A673 (cell line): ENCODE measurements at regions of chr6 and their contacts with region 1.

Region 1: DNA sequence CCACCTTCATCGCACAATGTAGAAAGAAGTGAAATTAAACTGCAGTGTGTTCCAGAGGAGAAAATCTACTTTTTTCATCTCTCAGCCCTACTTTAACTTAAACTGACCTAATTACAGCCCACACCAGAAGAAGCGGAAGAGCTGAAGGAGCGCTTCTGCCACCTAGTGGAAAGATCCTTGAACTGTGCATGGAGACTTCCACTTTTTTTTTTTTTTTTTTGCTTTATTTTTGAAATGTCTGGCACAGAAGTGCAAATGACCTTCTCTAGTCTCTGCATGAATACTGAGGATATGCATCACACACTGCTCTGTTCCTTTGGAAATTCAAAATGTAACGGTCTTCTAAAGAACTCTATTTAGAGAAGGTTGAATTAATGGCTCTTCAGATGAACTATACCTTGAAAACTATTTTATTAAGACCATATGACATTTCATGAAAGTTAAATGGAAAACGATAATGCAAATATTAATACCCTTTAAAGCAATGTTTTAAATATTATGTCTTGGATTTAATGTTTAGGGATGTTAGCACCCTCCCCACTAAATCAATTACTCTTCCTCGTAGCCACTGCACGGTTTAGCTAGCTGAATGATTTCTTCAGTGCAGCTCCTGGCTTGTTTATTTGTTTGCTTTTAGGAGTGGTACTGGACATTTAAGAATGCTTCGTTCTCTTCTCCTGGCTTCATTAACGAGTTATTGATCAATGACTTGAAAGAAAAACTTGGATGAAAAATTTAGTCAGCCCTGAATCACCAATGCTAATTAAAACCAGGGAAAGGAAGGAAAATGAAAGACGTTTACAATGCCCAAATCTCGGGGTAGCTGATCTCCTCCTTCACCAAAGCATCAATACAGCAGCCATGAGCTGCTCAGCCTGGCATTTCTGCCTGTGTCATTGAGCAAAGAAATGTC is 569.6 kb upstream of the GJE1 start:
- DNase-seq: peak; percentile 93
- H3K4me3 ChIP-seq: peak overlapping the region; percentile 6
- H3K27ac ChIP-seq: peak overlapping the region; percentile 87
- H3K4me1 ChIP-seq: peaks cover 36% of the 10 kb centered on the region
- H3K27me3 ChIP-seq: no peaks in the 10 kb centered on the region
- CTCF ChIP-seq: peak; percentile 92

Region 2: GRCh38 chr6:139872665-139873064 is 1690.4 kb before region 1 on chr6:
- CTCF ChIA-PET with region 1: no interaction called
- POLR2A ChIA-PET with region 1: interaction called, 8 read pairs
- intact Hi-C with region 1: loop called (anchors 2 kb)
- DNase-seq: peak; percentile 58
- H3K4me3 ChIP-seq: no peak overlapping the region
- H3K27ac ChIP-seq: peak overlapping the region; percentile 98
- H3K4me1 ChIP-seq: peaks cover 48% of the 10 kb centered on the region
- H3K27me3 ChIP-seq: no peaks in the 10 kb centered on the region
- CTCF ChIP-seq: no peak

Region 3: GRCh38 chr6:140285471-140285870 is 1277.6 kb before region 1 on chr6:
- CTCF ChIA-PET with region 1: no interaction called
- POLR2A ChIA-PET with region 1: no interaction called
- intact Hi-C with region 1: loop called (anchors 1 kb)
- DNase-seq: peak; percentile 63
- H3K4me3 ChIP-seq: no peak overlapping the region
- H3K27ac ChIP-seq: peak overlapping the region; percentile 91
- H3K4me1 ChIP-seq: peaks cover 36% of the 10 kb centered on the region
- H3K27me3 ChIP-seq: no peaks in the 10 kb centered on the region
- CTCF ChIP-seq: no peak

Region 4: DNA sequence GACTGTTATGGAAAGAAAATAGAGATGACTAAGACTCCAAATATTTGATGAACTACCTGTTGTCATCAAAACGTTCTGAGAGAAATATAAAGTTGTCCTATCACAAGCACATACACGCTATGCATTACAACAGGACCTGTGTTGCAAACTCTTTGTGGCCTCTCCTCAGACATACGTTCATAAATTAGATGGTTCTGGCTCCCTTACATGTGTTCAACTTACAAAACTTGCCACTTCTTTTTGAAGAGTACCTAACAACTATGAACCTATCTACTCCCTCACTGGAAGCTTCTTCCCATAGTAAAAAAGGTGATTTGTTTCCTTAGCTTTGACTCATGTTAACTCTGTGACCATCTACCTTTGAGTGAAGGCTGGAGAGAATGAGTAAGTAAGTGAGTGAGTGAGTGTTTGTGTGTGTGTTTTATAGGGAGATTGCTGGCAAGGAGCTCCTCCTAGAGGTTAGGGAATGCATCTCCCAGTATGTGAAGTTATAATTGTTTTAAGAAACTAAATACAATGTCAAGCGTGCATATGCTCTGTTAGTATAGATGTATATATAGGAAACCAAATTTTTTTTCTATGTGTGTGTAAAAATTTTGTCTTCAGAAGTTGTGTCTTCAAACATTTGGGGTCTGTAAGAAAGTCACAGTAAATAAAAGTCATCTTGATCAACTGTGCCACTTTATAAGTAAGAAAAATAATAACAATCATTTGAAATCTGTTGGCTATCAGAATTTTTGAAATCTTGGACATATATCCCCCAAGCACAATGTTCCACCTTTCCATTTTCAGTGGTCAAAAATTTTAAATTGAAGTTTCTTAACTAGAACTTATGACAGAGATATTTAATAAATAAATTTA is 641.5 kb before region 1 on chr6:
- CTCF ChIA-PET with region 1: no interaction called
- POLR2A ChIA-PET with region 1: no interaction called
- intact Hi-C with region 1: loop called (anchors 5 kb)
- DNase-seq: peak; percentile 84
- H3K4me3 ChIP-seq: no peak overlapping the region
- H3K27ac ChIP-seq: peak overlapping the region; percentile 24
- H3K4me1 ChIP-seq: peaks cover 10% of the 10 kb centered on the region
- H3K27me3 ChIP-seq: no peaks in the 10 kb centered on the region
- CTCF ChIP-seq: peak; percentile 84

Region 5: GRCh38 chr6:141313986-141314385 is 249.1 kb before region 1 on chr6:
- CTCF ChIA-PET with region 1: no interaction called
- POLR2A ChIA-PET with region 1: no interaction called
- intact Hi-C with region 1: loop called (anchors 5 kb)
- DNase-seq: no peak
- H3K4me3 ChIP-seq: no peak overlapping the region
- H3K27ac ChIP-seq: no peak overlapping the region
- H3K4me1 ChIP-seq: no peaks in the 10 kb centered on the region
- H3K27me3 ChIP-seq: no peaks in the 10 kb centered on the region
- CTCF ChIP-seq: no peak

Region 6: GRCh38 chr6:141541581-141542324 is 21.4 kb before region 1 on chr6:
- CTCF ChIA-PET with region 1: interaction called, 11 read pairs
- POLR2A ChIA-PET with region 1: no interaction called
- intact Hi-C with region 1: no loop called
- DNase-seq: peak; percentile 61
- H3K4me3 ChIP-seq: no peak overlapping the region
- H3K27ac ChIP-seq: peak overlapping the region; percentile 59
- H3K4me1 ChIP-seq: peaks cover 8% of the 10 kb centered on the region
- H3K27me3 ChIP-seq: no peaks in the 10 kb centered on the region
- CTCF ChIP-seq: no peak

Region 7: DNA sequence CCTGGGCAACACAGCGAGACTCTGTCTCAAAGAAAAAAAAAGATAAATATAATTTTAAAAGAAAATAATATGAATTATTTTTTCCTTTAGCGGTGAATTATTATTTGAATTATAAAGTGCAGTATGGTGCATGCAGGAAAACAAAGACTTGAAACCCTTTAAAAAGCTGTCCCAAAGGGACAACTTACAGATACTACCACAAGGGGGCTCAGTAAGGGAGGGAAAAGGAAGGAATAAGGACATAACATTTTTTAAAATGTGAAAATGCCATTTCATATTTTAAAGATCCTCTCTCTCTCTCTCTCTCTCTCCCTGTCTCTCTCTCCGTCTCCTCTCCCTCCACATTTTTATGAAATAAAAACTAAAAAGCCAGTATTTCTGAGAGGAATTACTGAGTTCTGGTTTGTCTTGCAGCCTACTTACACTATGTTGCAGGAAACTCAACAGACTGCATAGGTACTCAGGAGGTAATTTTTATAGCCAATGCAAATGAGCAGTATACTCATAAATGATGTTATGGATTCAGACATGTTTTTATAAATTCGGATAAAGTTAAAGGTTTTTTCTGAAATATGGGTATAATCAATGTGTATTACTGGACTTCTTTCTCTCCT is 114.6 kb after region 1 on chr6:
- CTCF ChIA-PET with region 1: no interaction called
- POLR2A ChIA-PET with region 1: no interaction called
- intact Hi-C with region 1: loop called (anchors 1 kb)
- DNase-seq: peak; percentile 76
- H3K4me3 ChIP-seq: no peak overlapping the region
- H3K27ac ChIP-seq: no peak overlapping the region
- H3K4me1 ChIP-seq: peaks cover 22% of the 10 kb centered on the region
- H3K27me3 ChIP-seq: no peaks in the 10 kb centered on the region
- CTCF ChIP-seq: peak; percentile 72